ENCODE measurements at regions of chr5 and their contacts with region 1.

Region 1: DNA sequence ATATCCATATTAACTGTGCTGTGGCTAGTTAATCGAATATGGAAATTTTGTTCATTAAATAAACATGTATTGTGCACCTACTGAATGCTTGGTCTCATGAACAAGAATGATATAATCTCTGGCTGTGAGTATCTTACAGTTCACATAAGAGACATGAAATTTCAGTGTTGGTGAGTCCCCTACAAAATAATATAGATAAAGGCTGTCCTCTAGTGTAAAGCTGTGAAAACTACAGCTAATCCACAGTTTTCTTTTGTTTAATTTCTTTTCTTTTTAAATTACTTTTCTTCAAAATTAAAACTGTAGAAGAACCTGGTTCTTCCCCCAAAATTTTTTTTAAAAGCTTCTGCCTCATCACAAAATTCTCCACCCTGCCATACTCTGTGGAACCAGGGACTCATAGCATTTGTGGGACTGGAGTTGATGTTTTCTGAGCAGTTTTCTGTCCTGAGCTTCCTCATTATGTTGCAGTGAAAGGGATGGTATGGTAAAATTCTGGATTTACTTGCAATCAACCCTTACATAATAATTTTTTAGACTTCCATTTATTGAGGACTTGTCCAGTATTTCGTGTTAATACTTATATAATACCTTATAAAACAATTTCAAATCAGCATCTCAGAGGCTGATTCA is 135.0 kb downstream of the STK32A start:
- DNase-seq: peak; percentile 41
- ATAC-seq: no peak
- H3K4me3 ChIP-seq: no peak overlapping the region
- H3K27ac ChIP-seq: no peak overlapping the region
- H3K4me1 ChIP-seq: no peaks in the 10 kb centered on the region
- H3K27me3 ChIP-seq: no peaks in the 10 kb centered on the region
- CTCF ChIP-seq: peak; percentile 76

Region 2: GRCh38 chr5:146965761-146966659 is 403.8 kb before region 1 on chr5:
- CTCF ChIA-PET with region 1: no interaction called
- POLR2A ChIA-PET with region 1: no interaction called
- intact Hi-C with region 1: loop called (anchors 10 kb)
- DNase-seq: peak; percentile 83
- ATAC-seq: peak; percentile 88
- H3K4me3 ChIP-seq: no peak overlapping the region
- H3K27ac ChIP-seq: no peak overlapping the region
- H3K4me1 ChIP-seq: no peaks in the 10 kb centered on the region
- H3K27me3 ChIP-seq: peaks cover 21% of the 10 kb centered on the region; the same call in 1 of the 2 replicates
- CTCF ChIP-seq: peak; percentile 76

Region 3: GRCh38 chr5:147065071-147065470 is 304.8 kb before region 1 on chr5:
- CTCF ChIA-PET with region 1: no interaction called
- POLR2A ChIA-PET with region 1: no interaction called
- intact Hi-C with region 1: no loop called
- DNase-seq: no peak
- ATAC-seq: no peak
- H3K4me3 ChIP-seq: no peak overlapping the region
- H3K27ac ChIP-seq: no peak overlapping the region
- H3K4me1 ChIP-seq: no peaks in the 10 kb centered on the region
- H3K27me3 ChIP-seq: no peaks in the 10 kb centered on the region
- CTCF ChIP-seq: no peak

Region 4: GRCh38 chr5:147098233-147098790 is 271.5 kb before region 1 on chr5:
- CTCF ChIA-PET with region 1: interaction called, 3 read pairs
- POLR2A ChIA-PET with region 1: no interaction called
- intact Hi-C with region 1: loop called (anchors 1 kb)
- DNase-seq: peak; percentile 42
- ATAC-seq: no peak
- H3K4me3 ChIP-seq: no peak overlapping the region
- H3K27ac ChIP-seq: no peak overlapping the region
- H3K4me1 ChIP-seq: no peaks in the 10 kb centered on the region
- H3K27me3 ChIP-seq: peaks cover 36% of the 10 kb centered on the region
- CTCF ChIP-seq: peak; percentile 62

Region 5: GRCh38 chr5:147223948-147224791 is 145.7 kb before region 1 on chr5:
- CTCF ChIA-PET with region 1: interaction called, 27 read pairs
- POLR2A ChIA-PET with region 1: no interaction called
- intact Hi-C with region 1: loop called (anchors 1 kb)
- DNase-seq: peak; percentile 55
- ATAC-seq: peak; percentile 87
- H3K4me3 ChIP-seq: no peak overlapping the region
- H3K27ac ChIP-seq: no peak overlapping the region
- H3K4me1 ChIP-seq: peaks cover 4% of the 10 kb centered on the region; the same call in 1 of the 2 replicates
- H3K27me3 ChIP-seq: 0 out of 2 replicates have a peak, but pooled peaks cover 4% of the 10 kb centered on the region
- CTCF ChIP-seq: peak; percentile 69

Region 6: GRCh38 chr5:148397968-148398597 is 1028.2 kb after region 1 on chr5:
- CTCF ChIA-PET with region 1: no interaction called
- POLR2A ChIA-PET with region 1: interaction called, 22 read pairs
- intact Hi-C with region 1: no loop called
- DNase-seq: peak; percentile 54
- ATAC-seq: peak; percentile 24
- H3K4me3 ChIP-seq: no peak overlapping the region
- H3K27ac ChIP-seq: peak overlapping the region; percentile 18
- H3K4me1 ChIP-seq: peaks cover 59% of the 10 kb centered on the region
- H3K27me3 ChIP-seq: no peaks in the 10 kb centered on the region
- CTCF ChIP-seq: no peak

Measured in PC-3 (cell line).